ENCODE measurements at regions of chr4 and their contacts with region 1.

Region 1: DNA sequence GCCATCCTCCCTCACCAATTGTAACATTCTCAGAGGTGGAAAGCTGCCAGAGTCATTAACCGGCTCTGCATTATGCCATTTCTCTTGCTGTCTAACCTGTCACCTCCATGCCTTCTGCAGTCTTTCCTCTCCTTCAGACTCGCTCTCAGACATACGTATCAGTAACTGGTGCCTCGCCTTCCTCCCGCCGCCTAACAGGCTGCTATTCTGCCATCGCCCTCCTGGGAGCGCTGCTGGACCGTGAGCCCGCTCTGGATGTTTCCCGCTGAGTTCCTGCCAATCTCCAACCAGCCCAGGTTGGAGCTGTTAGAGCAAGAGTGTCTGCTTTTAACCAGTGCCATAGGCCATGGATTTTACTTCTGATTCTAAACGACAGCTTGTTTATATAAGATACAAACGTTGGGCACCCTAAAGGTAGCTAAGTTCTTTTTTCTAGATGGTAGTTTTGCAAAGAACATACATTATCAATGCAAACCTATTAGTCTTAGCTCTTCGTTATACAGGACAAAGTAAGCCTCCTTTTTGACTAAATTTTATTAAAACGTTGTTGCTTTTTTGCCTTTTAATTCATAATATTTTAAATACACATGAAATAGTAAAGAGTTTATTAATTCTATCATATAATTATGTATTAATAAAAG is 59.5 kb upstream of the NEIL3 start:
- DNase-seq: peak; percentile 72
- H3K4me3 Mint-ChIP-seq: no peak overlapping the region
- H3K27ac Mint-ChIP-seq: no peak overlapping the region
- H3K4me1 Mint-ChIP-seq: peaks cover 21% of the 10 kb centered on the region
- H3K27me3 Mint-ChIP-seq: peaks cover 3% of the 10 kb centered on the region

Region 2: DNA sequence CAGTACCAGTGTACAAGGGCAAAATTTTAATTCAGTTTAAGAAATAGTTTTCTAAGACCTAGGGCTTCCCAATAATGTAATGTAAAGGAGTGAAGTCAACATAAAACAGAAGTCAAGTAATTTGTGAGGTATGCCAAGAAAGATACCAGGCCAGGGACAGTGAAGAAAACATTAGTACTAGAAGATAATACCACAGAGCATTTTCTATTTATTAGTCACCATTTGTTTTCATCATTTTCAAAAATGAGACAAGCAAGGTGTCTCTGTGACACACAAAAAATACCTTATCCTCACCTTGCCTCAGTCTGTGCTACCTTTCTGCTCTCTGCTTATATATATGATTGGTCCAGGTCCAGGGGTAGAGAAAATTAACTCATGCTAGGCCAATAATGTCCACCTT is 504.3 kb before region 1 on chr4:
- intact Hi-C with region 1: no loop called
- DNase-seq: no peak
- H3K4me3 Mint-ChIP-seq: no peak overlapping the region
- H3K27ac Mint-ChIP-seq: no peak overlapping the region
- H3K4me1 Mint-ChIP-seq: no peaks in the 10 kb centered on the region
- H3K27me3 Mint-ChIP-seq: no peaks in the 10 kb centered on the region

Region 3: GRCh38 chr4:177047070-177047850 is 202.9 kb before region 1 on chr4:
- intact Hi-C with region 1: loop called (anchors 5 kb)
- DNase-seq: peak; percentile 34
- H3K4me3 Mint-ChIP-seq: no peak overlapping the region
- H3K27ac Mint-ChIP-seq: no peak overlapping the region
- H3K4me1 Mint-ChIP-seq: peaks cover 3% of the 10 kb centered on the region
- H3K27me3 Mint-ChIP-seq: peaks cover 7% of the 10 kb centered on the region

Region 4: DNA sequence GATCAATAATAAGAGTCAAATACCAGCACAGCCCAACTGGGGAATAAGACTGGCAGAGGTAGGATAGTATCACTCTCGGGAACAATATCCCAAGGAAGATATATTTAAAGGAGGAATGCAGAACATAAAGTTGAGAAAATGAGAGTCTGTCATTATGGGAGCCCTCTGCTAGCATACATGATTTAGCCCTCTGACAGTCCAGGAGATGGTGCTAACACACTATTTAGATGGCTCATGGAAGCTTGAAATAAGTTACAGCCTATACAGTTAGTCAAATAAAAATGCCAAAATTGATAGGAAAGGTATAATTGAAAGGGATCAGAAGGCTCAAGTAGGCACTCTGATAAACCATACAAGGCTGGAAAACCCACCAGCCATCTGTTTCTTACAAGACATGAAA is 141.5 kb before region 1 on chr4:
- intact Hi-C with region 1: loop called (anchors 2 kb)
- DNase-seq: no peak
- H3K4me3 Mint-ChIP-seq: no peak overlapping the region
- H3K27ac Mint-ChIP-seq: no peak overlapping the region
- H3K4me1 Mint-ChIP-seq: peaks cover 4% of the 10 kb centered on the region
- H3K27me3 Mint-ChIP-seq: no peaks in the 10 kb centered on the region

Region 5: DNA sequence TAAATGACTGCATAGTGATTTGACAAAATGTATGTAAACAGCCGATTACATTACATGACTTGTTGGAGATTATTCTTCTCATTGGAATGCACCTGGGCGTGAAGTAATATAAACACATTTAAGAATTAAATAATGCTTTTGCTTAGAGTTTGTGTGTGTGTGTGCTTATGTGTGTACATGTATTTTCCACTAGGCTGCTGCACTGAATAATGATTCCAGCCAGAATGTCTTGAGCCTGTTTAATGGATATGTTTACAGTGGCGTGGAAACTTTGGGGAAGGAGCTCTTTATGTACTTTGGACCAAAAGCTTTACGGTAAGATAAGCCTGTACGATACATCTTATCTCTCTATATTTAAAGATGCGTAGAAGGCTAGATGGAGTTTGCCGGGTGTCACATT is 72.1 kb after region 1 on chr4:
- intact Hi-C with region 1: loop called (anchors 5 kb)
- DNase-seq: no peak
- H3K4me3 Mint-ChIP-seq: no peak overlapping the region
- H3K27ac Mint-ChIP-seq: peak overlapping the region; percentile 24
- H3K4me1 Mint-ChIP-seq: peaks cover 79% of the 10 kb centered on the region
- H3K27me3 Mint-ChIP-seq: no peaks in the 10 kb centered on the region

Region 6: DNA sequence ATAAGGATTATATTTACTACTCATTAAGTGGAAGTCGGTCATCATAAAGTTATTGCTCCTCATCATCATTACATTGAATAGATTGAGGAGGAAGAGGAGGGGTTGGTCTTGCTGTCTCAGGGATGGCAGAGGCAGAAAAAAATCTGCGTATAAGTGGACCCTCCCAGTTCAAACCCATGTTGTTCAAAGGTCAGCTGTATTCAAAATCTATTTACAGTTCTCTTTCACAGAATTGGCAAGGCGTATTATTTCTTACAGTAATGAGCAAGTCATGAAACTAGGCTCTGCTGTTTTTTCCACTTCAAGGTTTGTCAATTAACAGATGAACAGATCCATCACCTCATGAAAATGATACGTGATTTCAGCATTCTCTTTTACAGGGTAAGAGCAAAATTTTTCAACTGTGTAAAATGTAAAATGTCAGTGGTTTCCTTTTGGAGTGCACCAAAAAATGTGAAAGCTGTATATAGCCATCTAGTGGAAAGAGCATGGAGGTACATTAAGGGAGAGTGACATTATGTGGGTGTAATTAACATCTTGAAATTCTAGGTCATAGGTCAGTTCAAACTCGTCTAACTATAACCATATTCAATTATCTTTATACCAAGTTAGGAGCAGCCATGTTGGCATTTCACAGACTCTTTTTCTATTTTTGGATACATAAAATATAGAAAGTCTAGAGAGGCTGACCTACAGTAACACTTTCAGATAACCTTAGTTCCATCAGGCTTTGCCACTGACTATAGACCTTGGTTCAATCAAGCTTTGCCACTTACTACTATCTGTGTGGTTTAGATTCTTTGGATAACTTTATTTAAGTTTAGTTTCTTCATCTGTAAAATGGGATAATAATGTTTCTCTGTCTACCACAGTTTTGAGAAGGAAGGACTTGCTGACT is 89.5 kb after region 1 on chr4:
- intact Hi-C with region 1: loop called (anchors 1 kb)
- DNase-seq: no peak
- H3K4me3 Mint-ChIP-seq: no peak overlapping the region
- H3K27ac Mint-ChIP-seq: peak overlapping the region; percentile 80
- H3K4me1 Mint-ChIP-seq: peaks cover 41% of the 10 kb centered on the region
- H3K27me3 Mint-ChIP-seq: no peaks in the 10 kb centered on the region

Region 7: GRCh38 chr4:177441803-177442622 is 191.8 kb after region 1 on chr4 and contains the start of gene AGA:
- intact Hi-C with region 1: loop called (anchors 1 kb)
- DNase-seq: peak; percentile 95
- H3K4me3 Mint-ChIP-seq: peak within 1 kb of the TSS; percentile 94
- H3K27ac Mint-ChIP-seq: peak within 1 kb of the TSS; percentile 97
- H3K4me1 Mint-ChIP-seq: peaks cover 31% of the 10 kb centered on the region
- H3K27me3 Mint-ChIP-seq: no peaks in the 10 kb centered on the region
- total RNA-seq, gene AGA: 19.5 and 21.0 TPM in 2 replicates

Region 8: DNA sequence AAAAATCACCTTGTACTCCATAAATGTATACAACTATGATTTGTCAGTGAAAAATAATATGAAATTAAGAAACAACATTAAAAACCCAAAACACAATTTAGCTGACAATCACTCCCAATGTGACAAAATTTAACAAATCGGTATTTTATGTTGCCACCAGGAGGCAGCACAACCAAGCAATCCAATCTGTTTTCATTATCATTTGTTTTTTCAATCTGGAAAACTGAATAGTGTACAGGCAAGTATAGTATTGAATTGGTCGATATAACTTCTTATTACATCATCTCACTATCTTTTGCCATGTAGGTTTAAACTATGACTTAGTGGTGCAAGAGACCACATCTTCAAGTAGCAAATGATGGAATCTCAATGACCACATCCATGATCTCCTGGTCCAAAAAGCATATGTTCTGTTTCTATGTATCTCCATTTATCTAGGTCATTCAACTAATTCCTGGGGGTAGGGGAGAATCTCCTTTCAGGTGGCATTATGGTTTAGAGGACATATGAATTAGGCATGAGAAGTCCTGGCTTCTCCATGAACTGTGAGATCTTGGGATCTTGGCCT is 304.9 kb after region 1 on chr4:
- intact Hi-C with region 1: loop called (anchors 2 kb)
- DNase-seq: no peak
- H3K4me3 Mint-ChIP-seq: no peak overlapping the region
- H3K27ac Mint-ChIP-seq: no peak overlapping the region
- H3K4me1 Mint-ChIP-seq: no peaks in the 10 kb centered on the region
- H3K27me3 Mint-ChIP-seq: no peaks in the 10 kb centered on the region

Measured in activated T-helper 2 cell treated with anti-CD3 and anti-CD28 coated beads, Interferon-gamma antibody, Interleukin-2, Interleukin-4, amounts not matched to agents 10 μg/mL and 5 μg/mL and 100 μg/mL, durations not matched to agents 14 hours and 24 hours and 36 hours (primary cell).